ENCODE measurements at regions of chr6 and their contacts with region 1.

Region 1: DNA sequence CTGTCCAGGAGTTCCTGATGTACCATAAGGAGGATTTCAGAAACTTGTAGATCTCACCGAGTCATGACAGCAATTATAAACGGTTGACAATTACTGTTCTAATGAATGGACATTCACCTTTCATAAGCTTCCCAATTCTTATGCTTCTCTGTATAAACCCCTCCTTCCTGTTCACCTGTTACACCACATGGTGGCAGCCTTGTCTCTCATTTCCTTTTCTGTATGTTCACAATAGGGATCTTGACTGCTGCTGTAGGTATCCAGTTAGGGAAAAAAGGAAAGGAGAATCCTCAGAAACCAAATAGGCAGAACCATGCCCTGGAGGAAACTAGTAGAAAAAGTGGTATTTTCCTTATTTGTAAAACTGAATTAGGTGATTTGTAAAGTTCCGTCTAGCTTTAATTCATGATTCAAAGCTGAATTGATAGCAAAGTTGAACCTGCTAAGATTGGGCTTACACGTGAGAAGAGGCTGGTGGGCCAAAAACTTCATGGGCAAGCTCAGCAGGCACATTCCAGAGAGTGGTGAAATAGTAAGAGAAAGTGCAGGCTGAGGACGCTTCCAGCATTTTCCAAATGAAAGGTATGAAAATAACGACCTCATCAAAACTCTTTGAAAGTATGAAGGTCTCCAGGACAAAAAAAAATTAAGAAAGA is 29.0 kb upstream of the TBPL1 start:
- DNase-seq: peak; percentile 33
- ATAC-seq: peak; percentile 93
- H3K4me3 ChIP-seq: no peak overlapping the region
- H3K27ac ChIP-seq: no peak overlapping the region
- H3K4me1 ChIP-seq: no peaks in the 10 kb centered on the region
- H3K27me3 ChIP-seq: no peaks in the 10 kb centered on the region
- CTCF ChIP-seq: peak; percentile 78 to 93 (median 82)
- EP300 ChIP-seq: no peak
- POLR2A ChIP-seq: no peak
- RAD21 ChIP-seq: peak; percentile 100

Region 2: GRCh38 chr6:133937909-133938308 is 13.8 kb after region 1 on chr6:
- CTCF ChIA-PET with region 1: interaction called, 18 read pairs
- POLR2A ChIA-PET with region 1: no interaction called
- RAD21 ChIA-PET with region 1: no interaction called
- SMC1A ChIA-PET with region 1: interaction called, 7 read pairs
- in situ Hi-C with region 1: no loop called
- intact Hi-C with region 1: no loop called
- DNase-seq: no peak
- ATAC-seq: no peak
- H3K4me3 ChIP-seq: no peak overlapping the region
- H3K27ac ChIP-seq: no peak overlapping the region
- H3K4me1 ChIP-seq: no peaks in the 10 kb centered on the region
- H3K27me3 ChIP-seq: no peaks in the 10 kb centered on the region
- CTCF ChIP-seq: no peak
- EP300 ChIP-seq: no peak
- POLR2A ChIP-seq: no peak
- RAD21 ChIP-seq: no peak

Region 3: DNA sequence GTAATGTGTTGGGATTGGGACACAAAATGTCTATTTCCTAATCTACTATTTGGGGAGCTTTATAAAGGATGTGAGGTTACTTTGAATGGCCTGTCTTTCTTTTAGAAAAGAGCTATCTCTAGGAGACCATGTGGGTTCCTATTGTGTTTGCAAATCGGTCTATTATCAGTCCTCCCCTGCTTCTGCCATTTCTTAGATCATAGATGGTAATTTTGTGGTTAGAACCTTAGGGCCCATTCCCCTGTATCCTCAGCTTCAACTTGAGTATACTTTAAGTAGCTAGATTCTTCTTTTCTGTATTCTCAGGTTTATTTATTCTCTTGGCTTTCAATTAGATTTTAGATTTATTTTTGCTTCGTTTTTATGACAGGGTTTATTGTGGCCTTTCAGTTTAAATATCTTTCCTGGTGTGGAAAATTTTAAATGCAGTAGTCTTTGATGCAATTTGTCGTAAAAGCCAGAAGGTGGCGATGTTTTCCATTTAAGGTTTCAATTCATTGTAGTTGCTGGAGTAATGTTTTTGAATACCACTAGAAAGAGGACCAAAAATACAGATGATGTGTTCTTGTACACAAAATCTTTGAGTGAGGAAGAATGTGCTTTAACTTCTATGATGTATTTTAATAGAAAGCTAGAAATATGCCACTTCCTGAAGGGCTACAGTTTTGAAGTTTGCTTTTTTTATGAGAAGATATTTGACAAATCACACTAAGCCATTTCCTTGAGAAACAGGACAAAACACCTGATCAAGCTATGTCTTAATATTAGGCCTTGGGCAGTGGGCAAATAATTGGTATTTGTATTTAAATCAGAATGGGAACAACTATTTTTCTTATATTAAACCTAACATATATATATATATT is 49.3 kb after region 1 on chr6:
- CTCF ChIA-PET with region 1: interaction called, 45 read pairs
- POLR2A ChIA-PET with region 1: no interaction called
- RAD21 ChIA-PET with region 1: interaction called, 12 read pairs
- SMC1A ChIA-PET with region 1: interaction called, 27 read pairs
- in situ Hi-C with region 1: no loop called
- intact Hi-C with region 1: loop called (anchors 2 kb)
- DNase-seq: peak; percentile 28
- ATAC-seq: peak; percentile 75
- H3K4me3 ChIP-seq: no peak overlapping the region
- H3K27ac ChIP-seq: no peak overlapping the region
- H3K4me1 ChIP-seq: no peaks in the 10 kb centered on the region
- H3K27me3 ChIP-seq: no peaks in the 10 kb centered on the region
- CTCF ChIP-seq: peak; percentile 51 to 68 (median 65); a peak in 5 of 6 replicates
- EP300 ChIP-seq: no peak
- POLR2A ChIP-seq: no peak
- RAD21 ChIP-seq: peak; percentile 72

Region 4: GRCh38 chr6:134039116-134039515 is 115.0 kb after region 1 on chr6:
- CTCF ChIA-PET with region 1: interaction called, 4 read pairs
- POLR2A ChIA-PET with region 1: interaction called, 10 read pairs
- RAD21 ChIA-PET with region 1: no interaction called
- SMC1A ChIA-PET with region 1: no interaction called
- in situ Hi-C with region 1: no loop called
- intact Hi-C with region 1: no loop called
- DNase-seq: no peak
- ATAC-seq: no peak
- H3K4me3 ChIP-seq: no peak overlapping the region
- H3K27ac ChIP-seq: no peak overlapping the region
- H3K4me1 ChIP-seq: no peaks in the 10 kb centered on the region
- H3K27me3 ChIP-seq: no peaks in the 10 kb centered on the region
- CTCF ChIP-seq: no peak
- EP300 ChIP-seq: no peak
- POLR2A ChIP-seq: no peak
- RAD21 ChIP-seq: no peak

Region 5: DNA sequence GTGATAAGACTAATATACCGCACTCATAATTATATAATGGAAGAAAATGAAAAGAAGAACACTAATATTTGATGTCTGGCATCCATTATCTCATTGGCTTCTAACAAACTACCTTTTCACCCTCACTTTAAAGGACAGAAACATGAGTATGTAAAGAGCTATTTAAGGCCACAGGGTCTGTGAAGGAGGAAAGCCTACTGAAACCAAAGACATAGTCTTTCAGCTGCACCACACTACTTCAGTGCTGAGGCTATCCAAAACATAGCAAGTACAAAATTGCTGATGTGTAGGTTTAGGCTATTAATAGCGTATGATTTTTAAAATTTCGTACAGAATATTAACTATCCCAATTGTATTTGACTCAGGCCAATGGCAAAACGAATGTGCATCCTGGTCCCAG is 166.5 kb after region 1 on chr6:
- CTCF ChIA-PET with region 1: interaction called, 276 read pairs
- POLR2A ChIA-PET with region 1: no interaction called
- RAD21 ChIA-PET with region 1: interaction called, 133 read pairs
- SMC1A ChIA-PET with region 1: interaction called, 187 read pairs
- in situ Hi-C with region 1: loop called (anchors 5 kb)
- intact Hi-C with region 1: no loop called
- DNase-seq: no peak
- ATAC-seq: no peak
- H3K4me3 ChIP-seq: no peak overlapping the region
- H3K27ac ChIP-seq: no peak overlapping the region
- H3K4me1 ChIP-seq: no peaks in the 10 kb centered on the region
- H3K27me3 ChIP-seq: peaks cover 0 to 2% of the 10 kb centered on the region in 2 experiments; a peak in 2 of 4 replicates
- CTCF ChIP-seq: no peak
- EP300 ChIP-seq: no peak
- POLR2A ChIP-seq: no peak
- RAD21 ChIP-seq: no peak

Region 6: GRCh38 chr6:134235937-134236751 is 312.1 kb after region 1 on chr6:
- CTCF ChIA-PET with region 1: no interaction called
- POLR2A ChIA-PET with region 1: no interaction called
- RAD21 ChIA-PET with region 1: no interaction called
- SMC1A ChIA-PET with region 1: no interaction called
- in situ Hi-C with region 1: no loop called
- intact Hi-C with region 1: no loop called
- DNase-seq: peak; percentile 77
- ATAC-seq: peak; percentile 96
- H3K4me3 ChIP-seq: no peak overlapping the region
- H3K27ac ChIP-seq: peak overlapping the region; percentile 47
- H3K4me1 ChIP-seq: peaks cover 12% of the 10 kb centered on the region
- H3K27me3 ChIP-seq: no peaks in the 10 kb centered on the region
- CTCF ChIP-seq: no peak
- EP300 ChIP-seq: peak; percentile 69 to 77; a peak in 2 of 4 replicates
- POLR2A ChIP-seq: no peak
- RAD21 ChIP-seq: no peak

Measured in GM12878 (cell line).